Activated naive CD4-positive, alpha-beta T cell treated with anti-CD3 and anti-CD28 coated beads for 36 hours (primary cell): ENCODE measurements at regions of chr9 and their contacts with region 1.

Region 1: GRCh38 chr9:120755827-120756434 is 37.3 kb downstream of the FBXW2 start:
- DNase-seq: peak; percentile 83
- H3K4me3 Mint-ChIP-seq: no peak overlapping the region
- H3K27ac Mint-ChIP-seq: peak overlapping the region; percentile 58
- H3K4me1 Mint-ChIP-seq: peaks cover 34% of the 10 kb centered on the region
- H3K27me3 Mint-ChIP-seq: no peaks in the 10 kb centered on the region

Region 2: DNA sequence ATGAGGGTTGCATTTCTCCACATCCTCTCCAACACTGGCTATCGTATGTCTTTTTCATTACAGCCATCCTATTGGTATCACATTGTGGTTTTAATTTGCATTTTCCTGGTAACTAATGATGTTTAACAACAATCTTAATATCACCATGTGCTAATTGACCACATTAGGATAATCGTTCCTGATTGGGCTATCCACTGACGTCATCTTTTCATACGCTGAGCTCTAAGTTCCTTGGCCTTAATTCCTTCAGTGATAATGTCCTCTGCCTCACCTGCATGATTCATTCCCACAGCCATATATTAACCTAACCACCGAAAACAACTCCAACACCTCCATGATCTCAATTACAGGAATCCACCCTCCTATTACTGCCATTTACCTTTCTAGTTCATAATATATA is 838.8 kb before region 1 on chr9:
- CTCF ChIA-PET with region 1: no interaction called
- intact Hi-C with region 1: no loop called
- DNase-seq: no peak
- H3K4me3 Mint-ChIP-seq: no peak overlapping the region
- H3K27ac Mint-ChIP-seq: no peak overlapping the region
- H3K4me1 Mint-ChIP-seq: no peaks in the 10 kb centered on the region
- H3K27me3 Mint-ChIP-seq: no peaks in the 10 kb centered on the region

Region 3: GRCh38 chr9:120767456-120768167 is 11.7 kb after region 1 on chr9:
- CTCF ChIA-PET with region 1: interaction called, 11 read pairs
- intact Hi-C with region 1: no loop called
- DNase-seq: no peak
- H3K4me3 Mint-ChIP-seq: no peak overlapping the region
- H3K27ac Mint-ChIP-seq: peak overlapping the region; percentile 1
- H3K4me1 Mint-ChIP-seq: peaks cover 3% of the 10 kb centered on the region
- H3K27me3 Mint-ChIP-seq: no peaks in the 10 kb centered on the region

Region 4: DNA sequence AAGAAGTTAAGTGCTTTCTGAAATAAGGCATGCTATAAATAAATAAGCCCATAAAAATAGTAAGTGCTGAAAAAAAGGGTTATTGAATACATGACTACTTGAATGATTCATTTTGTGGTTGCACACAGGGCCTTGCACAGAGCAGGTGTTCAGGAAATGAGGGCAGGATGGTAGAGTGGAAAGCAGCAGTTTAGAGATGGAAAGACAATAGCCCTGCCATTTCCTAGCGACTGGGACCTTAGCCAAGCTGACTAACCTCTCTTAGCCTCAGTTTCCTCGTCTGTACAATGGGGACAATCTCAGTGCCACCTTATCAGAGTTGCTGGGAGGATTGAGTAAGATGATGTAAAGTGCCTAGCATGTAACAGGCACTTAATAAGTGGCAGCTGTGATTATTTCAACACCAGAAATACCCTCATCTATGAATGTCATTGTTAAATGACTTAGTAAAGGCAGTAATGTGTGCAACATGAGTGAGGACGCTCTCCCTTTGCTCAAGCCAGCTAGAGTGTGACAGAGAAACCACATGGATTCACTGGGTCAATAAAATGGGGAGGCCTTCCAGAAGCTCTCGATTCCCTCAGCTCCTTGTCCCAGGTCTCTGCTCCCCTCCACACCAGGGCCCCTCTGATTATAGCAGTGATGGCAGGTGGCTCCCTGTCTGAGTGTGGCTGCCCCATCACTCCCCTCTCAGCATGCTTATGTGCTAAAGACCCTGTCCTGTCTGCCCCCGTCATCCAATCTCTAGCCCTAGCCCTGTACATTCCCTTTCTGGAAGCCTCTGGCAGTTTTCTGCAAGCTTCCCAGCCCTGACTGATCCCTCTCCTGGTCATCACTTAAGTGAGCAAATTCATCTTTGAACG is 137.0 kb after region 1 on chr9:
- CTCF ChIA-PET with region 1: interaction called, 4 read pairs
- intact Hi-C with region 1: loop called (anchors 1 kb)
- DNase-seq: peak; percentile 86
- H3K4me3 Mint-ChIP-seq: peak overlapping the region; percentile 70
- H3K27ac Mint-ChIP-seq: peak overlapping the region; percentile 97
- H3K4me1 Mint-ChIP-seq: peaks cover 90% of the 10 kb centered on the region
- H3K27me3 Mint-ChIP-seq: no peaks in the 10 kb centered on the region

Region 5: DNA sequence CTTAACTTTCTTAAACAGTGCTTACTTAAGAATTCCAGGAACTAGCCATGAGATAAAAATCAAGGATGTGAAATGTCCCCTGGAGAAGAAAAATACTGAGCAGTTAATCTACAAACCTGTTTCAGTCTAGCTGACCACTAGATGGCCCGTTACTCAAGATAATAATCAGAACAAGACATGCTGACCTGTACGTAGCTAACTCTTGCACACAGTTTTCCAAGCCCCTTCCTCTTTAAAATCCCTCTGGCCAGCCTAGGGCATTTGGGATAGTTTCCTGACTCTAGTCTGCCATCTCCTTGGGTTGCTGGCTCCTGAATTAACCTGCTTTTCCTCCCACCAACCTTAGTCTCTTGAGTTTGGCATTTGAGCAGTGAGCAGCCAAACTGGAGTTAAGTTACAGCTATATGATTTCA is 229.9 kb after region 1 on chr9:
- CTCF ChIA-PET with region 1: interaction called, 8 read pairs
- intact Hi-C with region 1: loop called (anchors 1 kb)
- DNase-seq: peak; percentile 13
- H3K4me3 Mint-ChIP-seq: no peak overlapping the region
- H3K27ac Mint-ChIP-seq: no peak overlapping the region
- H3K4me1 Mint-ChIP-seq: peaks cover 2% of the 10 kb centered on the region
- H3K27me3 Mint-ChIP-seq: no peaks in the 10 kb centered on the region

Region 6: GRCh38 chr9:121066850-121067249 is 310.9 kb after region 1 on chr9:
- CTCF ChIA-PET with region 1: interaction called, 10 read pairs
- intact Hi-C with region 1: no loop called
- DNase-seq: no peak
- H3K4me3 Mint-ChIP-seq: no peak overlapping the region
- H3K27ac Mint-ChIP-seq: no peak overlapping the region
- H3K4me1 Mint-ChIP-seq: peaks cover 26% of the 10 kb centered on the region
- H3K27me3 Mint-ChIP-seq: no peaks in the 10 kb centered on the region

Region 7: GRCh38 chr9:121169094-121169601 is 413.2 kb after region 1 on chr9:
- CTCF ChIA-PET with region 1: no interaction called
- intact Hi-C with region 1: loop called (anchors 5 kb)
- DNase-seq: peak; percentile 36
- H3K4me3 Mint-ChIP-seq: no peak overlapping the region
- H3K27ac Mint-ChIP-seq: peak overlapping the region; percentile 54
- H3K4me1 Mint-ChIP-seq: peaks cover 21% of the 10 kb centered on the region
- H3K27me3 Mint-ChIP-seq: no peaks in the 10 kb centered on the region

Region 8: GRCh38 chr9:121399883-121400607 is 644.1 kb after region 1 on chr9:
- CTCF ChIA-PET with region 1: no interaction called
- intact Hi-C with region 1: loop called (anchors 5 kb)
- DNase-seq: no peak
- H3K4me3 Mint-ChIP-seq: no peak overlapping the region
- H3K27ac Mint-ChIP-seq: no peak overlapping the region
- H3K4me1 Mint-ChIP-seq: no peaks in the 10 kb centered on the region
- H3K27me3 Mint-ChIP-seq: no peaks in the 10 kb centered on the region